ENCODE measurements at regions of chr21 and their contacts with region 1.

Region 1: DNA sequence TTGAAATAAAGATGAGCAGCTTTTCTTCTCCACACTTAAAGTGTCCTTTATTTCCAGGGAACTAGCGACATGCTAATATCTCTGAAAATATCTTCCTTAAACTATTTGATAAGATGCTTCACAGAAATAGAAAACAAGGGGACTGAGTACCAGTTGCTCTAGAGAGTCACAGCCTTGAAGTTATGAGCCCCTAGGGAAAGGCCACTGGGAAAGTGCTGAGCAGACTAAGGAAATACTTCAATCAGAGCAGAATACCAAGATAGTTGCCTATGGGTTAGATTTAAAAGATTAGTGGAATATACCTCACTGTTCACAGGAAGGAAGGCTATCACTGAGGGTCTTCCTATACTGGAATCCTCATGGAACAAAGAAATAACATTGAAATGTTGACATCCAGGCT is 166.3 kb upstream of the ADAMTS5 start:
- DNase-seq: no peak
- H3K4me3 ChIP-seq: no peak overlapping the region
- H3K27me3 ChIP-seq: no peaks in the 10 kb centered on the region
- CTCF ChIP-seq: no peak

Region 2: DNA sequence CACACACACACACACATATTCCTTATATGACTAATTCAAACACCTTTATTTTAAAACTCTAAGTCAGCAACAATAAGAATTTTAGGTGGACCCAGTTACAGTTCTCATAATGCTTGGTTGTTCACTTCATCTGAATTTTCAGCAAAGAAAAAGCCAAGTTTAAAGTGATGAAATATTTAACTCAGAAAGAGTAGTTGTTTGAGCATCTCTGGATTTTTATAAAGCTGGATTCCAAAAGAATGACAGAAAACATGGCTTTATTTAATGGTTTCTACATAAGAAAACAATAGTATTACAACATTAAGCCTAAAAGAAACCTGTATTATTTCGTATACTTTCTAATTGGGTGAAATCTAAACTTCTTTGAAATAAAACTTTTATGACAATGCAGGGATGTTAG is 112.2 kb before region 1 on chr21:
- CTCF ChIA-PET with region 1: no interaction called
- POLR2A ChIA-PET with region 1: interaction called, 13 read pairs
- DNase-seq: no peak
- H3K4me3 ChIP-seq: no peak overlapping the region
- H3K27me3 ChIP-seq: no peaks in the 10 kb centered on the region
- CTCF ChIP-seq: no peak

Region 3: GRCh38 chr21:27082431-27083010 is 50.7 kb before region 1 on chr21:
- CTCF ChIA-PET with region 1: no interaction called
- POLR2A ChIA-PET with region 1: no interaction called
- DNase-seq: no peak
- H3K4me3 ChIP-seq: no peak overlapping the region
- H3K27me3 ChIP-seq: no peaks in the 10 kb centered on the region
- CTCF ChIP-seq: no peak

Measured in BJ (cell line).